ENCODE measurements at regions of chrX and their contacts with region 1.

Region 1: GRCh38 chrX:72644946-72645345 is 69.2 kb downstream of the PHKA1 start:
- DNase-seq: no peak
- ATAC-seq: no peak
- H3K4me3 ChIP-seq: no peak overlapping the region
- H3K27ac ChIP-seq: no peak overlapping the region
- H3K4me1 ChIP-seq: no peaks in the 10 kb centered on the region
- H3K27me3 ChIP-seq: no peaks in the 10 kb centered on the region
- CTCF ChIP-seq: no peak
- POLR2A ChIP-seq: no peak

Region 2: DNA sequence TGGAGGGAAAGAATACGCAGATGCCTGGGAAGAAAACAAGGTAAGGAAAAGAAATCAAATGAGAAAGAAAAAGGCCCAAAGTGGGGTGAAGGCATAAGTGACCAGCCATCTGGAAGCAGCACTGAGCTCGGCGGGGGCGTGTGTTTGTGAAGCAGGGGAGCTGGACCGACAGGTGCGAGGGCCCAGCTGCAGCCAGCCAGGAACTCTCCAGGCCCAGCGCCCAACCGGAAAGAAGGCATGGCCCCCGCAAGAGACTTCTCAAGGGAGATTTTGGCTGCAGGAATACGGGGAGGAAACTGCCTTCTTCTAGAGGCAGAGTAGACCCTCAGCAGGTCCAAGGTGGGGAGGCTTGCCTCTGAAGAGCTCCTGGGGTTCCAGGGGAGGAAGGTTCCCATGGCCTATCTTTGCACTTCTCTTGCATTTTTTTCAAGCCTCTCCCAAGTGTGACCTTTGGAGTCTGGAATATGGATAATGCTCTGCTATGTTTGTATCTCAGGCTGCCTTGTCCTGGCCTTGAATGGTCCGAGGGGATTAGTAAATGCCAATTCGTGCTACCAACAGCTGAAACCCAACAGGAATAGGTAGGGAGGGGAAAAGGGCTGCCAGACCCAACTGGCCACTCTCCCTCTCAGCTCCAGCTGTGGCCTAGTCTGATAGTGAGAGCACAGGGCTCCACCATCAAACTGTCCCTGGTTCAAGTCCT is 328.4 kb before region 1 on chrX:
- in situ Hi-C with region 1: no loop called
- intact Hi-C with region 1: no loop called
- DNase-seq: no peak
- ATAC-seq: no peak
- H3K4me3 ChIP-seq: no peak overlapping the region
- H3K27ac ChIP-seq: no peak overlapping the region
- H3K4me1 ChIP-seq: no peaks in the 10 kb centered on the region
- H3K27me3 ChIP-seq: peaks cover 0 to 3% (median 0%) of the 10 kb centered on the region in 3 donors
- CTCF ChIP-seq: no peak
- POLR2A ChIP-seq: no peak

Region 3: DNA sequence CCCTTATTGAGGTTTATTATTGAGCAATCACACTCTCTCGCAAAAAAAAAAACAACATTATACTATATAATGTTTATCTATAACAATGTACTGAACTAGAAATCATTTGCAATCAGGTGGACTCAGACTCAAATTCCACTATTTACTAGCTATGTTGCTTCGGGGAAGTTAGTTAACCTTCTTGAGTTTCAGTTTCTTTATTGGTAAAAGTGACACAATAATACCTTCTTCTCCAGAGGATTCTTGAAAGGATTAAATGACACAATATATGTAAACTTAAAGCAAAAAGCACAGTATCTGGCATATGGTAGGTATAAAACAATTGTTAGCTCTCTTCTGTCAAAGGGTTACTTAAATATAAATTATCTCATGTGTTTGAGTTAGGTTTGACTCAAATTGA is 40.8 kb before region 1 on chrX:
- in situ Hi-C with region 1: no loop called
- intact Hi-C with region 1: loop called (anchors 10 kb)
- DNase-seq: no peak
- ATAC-seq: no peak
- H3K4me3 ChIP-seq: no peak overlapping the region
- H3K27ac ChIP-seq: peak overlapping the region in 2 of 4 donors; percentile 30 to 55
- H3K4me1 ChIP-seq: no peaks in the 10 kb centered on the region
- H3K27me3 ChIP-seq: no peaks in the 10 kb centered on the region
- CTCF ChIP-seq: no peak
- POLR2A ChIP-seq: no peak